Activated CD8-positive, alpha-beta T cell treated with anti-CD3 and anti-CD28 coated beads for 36 hours (primary cell): ENCODE measurements at regions of chr3 and their contacts with region 1.

Region 1: GRCh38 chr3:30606301-30607031 is at the start of gene TGFBR2:
- DNase-seq: peak; percentile 96
- ATAC-seq: peak; percentile 75
- H3K4me3 Mint-ChIP-seq: peak within 1 kb of the TSS; percentile 88
- H3K27ac Mint-ChIP-seq: peak within 1 kb of the TSS; percentile 98
- H3K4me1 Mint-ChIP-seq: peaks cover 46% of the 10 kb centered on the region
- H3K27me3 Mint-ChIP-seq: no peaks in the 10 kb centered on the region
- CTCF ChIP-seq: no peak
- total RNA-seq, gene TGFBR2: 49.1 to 50.0 TPM

Region 2: DNA sequence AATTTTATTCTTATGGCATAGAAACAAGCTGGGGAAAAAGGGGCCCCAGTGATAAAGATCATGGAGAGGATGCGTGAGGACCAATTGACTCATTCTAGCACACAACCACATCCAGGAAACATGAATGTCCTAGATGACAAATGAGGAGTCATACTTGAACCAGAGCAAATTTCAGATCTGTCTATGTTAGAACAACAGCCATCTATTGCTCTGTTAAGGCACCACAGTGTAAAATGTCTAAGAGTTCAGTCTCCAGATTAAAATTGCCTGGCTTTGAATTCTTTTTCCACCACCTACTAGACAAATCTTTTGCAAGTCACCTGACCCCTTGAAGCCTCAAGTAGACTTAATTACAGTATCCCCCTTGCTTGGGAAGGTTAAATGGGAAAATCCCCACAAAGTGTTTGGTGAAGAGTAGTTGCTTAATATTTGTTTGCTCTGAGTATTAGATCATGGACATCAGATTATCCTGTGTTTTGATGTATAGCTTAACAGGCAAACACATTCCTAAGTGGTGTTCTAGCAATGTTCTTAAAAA is 258.7 kb before region 1 on chr3:
- CTCF ChIA-PET with region 1: no interaction called
- POLR2A ChIA-PET with region 1: interaction called, 3 read pairs
- intact Hi-C with region 1: loop called (anchors 5 kb)
- DNase-seq: peak; percentile 77
- ATAC-seq: peak; percentile 96
- H3K4me3 Mint-ChIP-seq: peak overlapping the region; percentile 20
- H3K27ac Mint-ChIP-seq: peak overlapping the region; percentile 91
- H3K4me1 Mint-ChIP-seq: peaks cover 84% of the 10 kb centered on the region
- H3K27me3 Mint-ChIP-seq: peaks cover 1% of the 10 kb centered on the region
- CTCF ChIP-seq: no peak

Region 3: DNA sequence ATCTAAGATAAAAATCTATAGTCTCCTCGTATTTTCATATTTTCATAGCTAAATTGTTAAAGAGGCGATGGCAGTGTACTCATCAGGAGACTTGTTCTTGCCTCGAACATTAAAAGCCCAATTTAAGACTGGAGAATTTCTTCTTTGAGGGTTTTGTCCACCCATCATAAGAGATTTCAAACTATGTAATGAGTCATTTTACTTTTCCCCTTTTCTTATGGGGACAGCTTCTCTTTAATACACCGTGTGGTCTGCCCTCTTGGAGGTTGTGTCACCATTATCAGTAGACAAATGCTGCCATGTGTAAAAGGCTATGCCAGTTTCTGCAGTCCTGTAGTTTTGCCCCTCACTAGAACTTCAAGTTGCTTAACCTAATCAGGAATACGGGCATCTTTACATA is 16.9 kb after region 1 on chr3:
- CTCF ChIA-PET with region 1: interaction called, 15 read pairs
- POLR2A ChIA-PET with region 1: interaction called, 107 read pairs
- intact Hi-C with region 1: no loop called
- DNase-seq: peak; percentile 42
- ATAC-seq: peak; percentile 31
- H3K4me3 Mint-ChIP-seq: peak overlapping the region; percentile 63
- H3K27ac Mint-ChIP-seq: peak overlapping the region; percentile 98
- H3K4me1 Mint-ChIP-seq: peaks cover 86% of the 10 kb centered on the region
- H3K27me3 Mint-ChIP-seq: no peaks in the 10 kb centered on the region
- CTCF ChIP-seq: no peak

Region 4: DNA sequence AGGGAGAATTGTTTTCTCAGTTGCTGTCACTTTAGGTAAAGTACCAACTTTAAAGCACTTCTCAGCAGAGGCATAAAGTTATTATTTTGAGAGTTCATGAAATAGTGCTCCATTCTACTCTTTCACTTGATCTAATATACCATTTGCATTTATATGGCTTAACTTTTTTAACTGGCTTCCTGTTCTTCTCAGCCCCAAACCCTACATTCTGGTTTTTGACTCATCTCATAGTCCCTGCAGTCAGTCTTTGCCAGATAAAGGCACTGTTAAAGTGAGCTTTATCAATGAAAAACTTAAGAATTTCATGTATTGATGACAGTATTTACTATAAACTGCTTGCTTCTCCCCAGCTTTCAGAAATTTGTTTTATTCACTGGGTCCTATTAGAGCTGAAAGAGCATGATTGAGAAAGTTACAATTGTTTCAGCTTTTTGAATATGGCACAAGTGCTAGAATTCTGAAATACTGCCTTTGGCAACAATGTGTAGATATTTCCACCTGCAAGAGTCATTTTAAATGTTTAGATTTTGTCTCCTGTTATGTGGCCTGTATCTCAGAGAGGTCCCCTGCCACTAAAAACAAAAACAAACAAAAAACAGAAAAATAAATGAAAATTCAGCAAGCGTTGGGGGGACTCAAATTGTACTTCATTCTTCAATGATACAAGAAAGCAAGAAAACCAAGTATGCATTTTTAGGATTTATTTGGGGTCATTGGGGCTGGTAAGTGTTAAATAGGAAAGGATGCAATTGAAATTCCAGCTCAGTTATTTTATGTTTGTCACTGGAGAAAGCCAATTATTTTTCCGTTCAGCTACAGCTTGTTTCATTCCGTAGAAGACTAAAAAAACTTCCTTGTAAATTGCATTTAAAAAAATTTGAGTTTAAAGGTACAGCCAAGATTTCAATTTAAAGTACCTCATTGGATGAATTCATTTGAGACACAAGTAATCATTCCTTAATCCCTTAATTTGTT is 28.6 kb after region 1 on chr3:
- CTCF ChIA-PET with region 1: interaction called, 6 read pairs
- POLR2A ChIA-PET with region 1: interaction called, 48 read pairs
- intact Hi-C with region 1: loop called (anchors 5 kb)
- DNase-seq: no peak
- ATAC-seq: no peak
- H3K4me3 Mint-ChIP-seq: peak overlapping the region; percentile 59
- H3K27ac Mint-ChIP-seq: peak overlapping the region; percentile 98
- H3K4me1 Mint-ChIP-seq: peaks cover 97% of the 10 kb centered on the region
- H3K27me3 Mint-ChIP-seq: no peaks in the 10 kb centered on the region
- CTCF ChIP-seq: peak; percentile 14

Region 5: GRCh38 chr3:30658328-30659052 is 52.0 kb after region 1 on chr3:
- CTCF ChIA-PET with region 1: interaction called, 5 read pairs
- POLR2A ChIA-PET with region 1: interaction called, 52 read pairs
- intact Hi-C with region 1: no loop called
- DNase-seq: peak; percentile 80
- ATAC-seq: peak; percentile 74
- H3K4me3 Mint-ChIP-seq: peak overlapping the region; percentile 65
- H3K27ac Mint-ChIP-seq: peak overlapping the region; percentile 98
- H3K4me1 Mint-ChIP-seq: peaks cover 100% of the 10 kb centered on the region
- H3K27me3 Mint-ChIP-seq: no peaks in the 10 kb centered on the region
- CTCF ChIP-seq: no peak